Activated T-helper 1 cell treated with anti-CD3 and anti-CD28 coated beads, Interleukin-12 subunit alpha, Interleukin-12 subunit beta, Interleukin-2, Interleukin-4 antibody, amounts not matched to agents 30 ng/mL and 10 ng/mL and 1 ng/mL, durations not matched to agents 14 hours and 24 hours and 36 hours (primary cell): ENCODE measurements at regions of chr14 and their contacts with region 1.

Region 1: GRCh38 chr14:34875031-34875922 is at the start of gene BAZ1A:
- DNase-seq: peak; percentile 41
- H3K4me3 Mint-ChIP-seq: peak within 1 kb of the TSS; percentile 100
- H3K27ac Mint-ChIP-seq: peak within 1 kb of the TSS; percentile 100
- H3K4me1 Mint-ChIP-seq: peaks cover 34% of the 10 kb centered on the region
- H3K27me3 Mint-ChIP-seq: peaks cover 2% of the 10 kb centered on the region
- total RNA-seq, gene BAZ1A: 75.0 and 83.7 TPM in 2 replicates

Region 2: DNA sequence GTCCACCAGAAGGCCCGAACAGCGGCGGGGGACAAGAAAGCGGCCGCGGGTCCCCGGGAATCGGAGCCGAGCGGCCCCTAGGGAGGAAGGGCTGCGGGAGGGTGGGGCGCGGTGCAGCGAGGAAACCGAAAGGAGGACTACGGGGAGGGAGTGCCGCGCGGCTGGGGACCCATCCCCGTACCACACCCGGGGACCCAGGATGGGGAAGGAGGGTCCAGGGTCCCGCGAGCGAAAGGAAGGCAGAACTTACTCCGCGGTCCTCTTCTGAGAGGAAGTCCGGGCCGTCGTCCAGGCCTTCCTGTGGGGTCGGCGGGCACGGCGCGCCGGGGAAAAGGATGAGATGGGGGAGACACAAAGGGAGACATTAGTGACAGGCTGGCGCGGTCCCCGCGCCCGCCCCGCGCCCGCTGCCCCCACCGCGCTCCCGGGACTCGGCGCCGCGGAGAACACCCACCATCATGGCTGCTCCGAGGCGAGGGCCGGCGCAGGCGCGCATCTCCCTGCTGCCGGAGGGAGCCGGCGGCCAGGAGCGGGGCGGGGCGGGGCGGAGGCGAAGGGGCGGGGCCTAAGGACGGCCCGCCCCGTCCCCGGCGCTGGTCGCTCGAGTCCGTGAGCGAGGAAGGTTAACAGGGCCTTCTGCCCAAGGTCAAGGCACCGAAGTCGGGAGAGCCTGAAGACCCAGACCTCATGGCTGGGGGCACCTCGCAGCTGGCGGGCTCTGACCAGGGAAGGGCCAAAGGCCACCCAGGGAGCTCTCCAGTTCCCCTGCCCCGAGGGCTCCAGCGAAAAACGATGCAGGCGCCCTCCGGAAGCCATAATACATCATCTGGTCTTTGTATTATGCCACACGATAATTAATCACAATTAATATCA is 245.4 kb before region 1 on chr14 and contains the start of gene SNX6:
- intact Hi-C with region 1: loop called (anchors 1 kb)
- DNase-seq: peak; percentile 76
- H3K4me3 Mint-ChIP-seq: peak within 1 kb of the TSS; percentile 95
- H3K27ac Mint-ChIP-seq: peak within 1 kb of the TSS; percentile 99
- H3K4me1 Mint-ChIP-seq: peaks cover 8% of the 10 kb centered on the region
- H3K27me3 Mint-ChIP-seq: peaks cover 11% of the 10 kb centered on the region
- total RNA-seq, gene SNX6: 70.3 and 75.6 TPM in 2 replicates

Region 3: GRCh38 chr14:34714320-34715126 is 160.8 kb before region 1 on chr14 and contains the start of gene CFL2:
- intact Hi-C with region 1: loop called (anchors 1 kb)
- DNase-seq: peak; percentile 51
- H3K4me3 Mint-ChIP-seq: peak within 1 kb of the TSS; percentile 95
- H3K27ac Mint-ChIP-seq: peak within 1 kb of the TSS; percentile 95
- H3K4me1 Mint-ChIP-seq: peaks cover 33% of the 10 kb centered on the region
- H3K27me3 Mint-ChIP-seq: peaks cover 9% of the 10 kb centered on the region
- total RNA-seq, gene CFL2: 8.3 and 9.2 TPM in 2 replicates

Region 4: DNA sequence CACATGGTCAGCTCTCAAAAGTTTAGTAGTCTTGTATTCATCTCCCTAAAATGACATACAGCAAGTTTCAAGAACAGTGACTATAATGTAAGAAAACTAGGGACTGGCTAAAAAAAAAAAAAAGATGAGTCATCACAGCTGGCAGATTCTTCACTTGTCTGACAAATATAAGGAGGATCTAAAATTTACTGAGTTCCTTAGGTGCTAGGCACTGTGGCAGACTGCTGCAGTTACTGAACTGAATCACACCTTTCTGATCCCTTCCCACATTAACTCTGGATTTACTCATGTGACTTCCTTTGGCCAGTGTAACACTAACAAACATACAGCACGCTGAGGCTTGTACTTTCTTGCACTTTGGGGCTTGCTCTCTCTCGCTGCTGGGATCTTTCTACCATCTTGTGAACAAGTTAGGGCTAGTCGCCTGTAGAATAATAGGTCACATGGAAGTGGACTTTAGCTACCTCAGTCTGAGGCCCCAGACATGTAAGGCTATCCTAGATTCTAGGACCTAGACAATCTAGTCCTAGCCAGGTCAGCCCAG is 32.2 kb before region 1 on chr14:
- intact Hi-C with region 1: loop called (anchors 1 kb)
- DNase-seq: peak; percentile 3
- H3K4me3 Mint-ChIP-seq: no peak overlapping the region
- H3K27ac Mint-ChIP-seq: peak overlapping the region; percentile 9
- H3K4me1 Mint-ChIP-seq: peaks cover 12% of the 10 kb centered on the region
- H3K27me3 Mint-ChIP-seq: no peaks in the 10 kb centered on the region

Region 5: DNA sequence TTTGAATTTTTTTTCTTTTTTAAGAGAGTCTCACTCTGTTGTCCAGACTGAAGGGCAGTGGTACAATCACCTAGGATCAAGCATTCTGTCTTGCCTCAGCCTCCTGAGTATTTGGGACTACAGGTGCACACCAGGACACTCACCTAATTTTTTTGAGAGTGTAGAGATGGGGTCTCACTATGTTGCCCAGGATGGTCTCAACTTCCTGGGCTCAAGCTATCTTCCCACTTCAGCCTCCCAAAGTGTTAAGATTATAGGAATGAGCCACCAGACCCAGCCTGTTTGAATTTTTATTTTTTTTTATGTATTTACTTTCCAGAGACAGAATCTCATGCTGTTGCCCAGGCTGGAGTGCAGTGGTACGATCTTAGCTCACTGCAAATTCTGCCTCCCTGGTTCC is 11.4 kb before region 1 on chr14:
- intact Hi-C with region 1: no loop called
- DNase-seq: no peak
- H3K4me3 Mint-ChIP-seq: no peak overlapping the region
- H3K27ac Mint-ChIP-seq: no peak overlapping the region
- H3K4me1 Mint-ChIP-seq: peaks cover 8% of the 10 kb centered on the region
- H3K27me3 Mint-ChIP-seq: no peaks in the 10 kb centered on the region

Region 6: DNA sequence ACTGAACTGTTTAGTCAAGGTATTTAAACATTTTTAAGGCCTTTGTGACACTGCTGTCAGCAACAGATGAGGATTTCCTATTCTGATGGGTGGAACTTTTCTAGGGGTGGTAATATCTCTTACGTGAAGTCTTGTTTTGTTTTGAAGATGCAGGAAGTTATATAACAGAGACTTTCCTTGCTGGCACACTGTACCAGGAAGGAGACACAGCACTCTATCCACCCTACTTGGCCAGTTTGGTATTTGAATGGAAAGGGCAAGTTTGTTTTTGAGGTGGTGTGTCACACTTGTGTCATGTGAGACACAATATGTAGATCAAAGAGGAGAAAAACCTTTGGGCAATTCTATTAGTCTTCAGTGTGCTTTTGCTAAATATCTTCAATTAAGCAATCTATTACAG is 55.9 kb after region 1 on chr14:
- intact Hi-C with region 1: loop called (anchors 1 kb)
- DNase-seq: peak; percentile 10
- H3K4me3 Mint-ChIP-seq: peak overlapping the region; percentile 59
- H3K27ac Mint-ChIP-seq: peak overlapping the region; percentile 81
- H3K4me1 Mint-ChIP-seq: peaks cover 35% of the 10 kb centered on the region
- H3K27me3 Mint-ChIP-seq: no peaks in the 10 kb centered on the region

Region 7: DNA sequence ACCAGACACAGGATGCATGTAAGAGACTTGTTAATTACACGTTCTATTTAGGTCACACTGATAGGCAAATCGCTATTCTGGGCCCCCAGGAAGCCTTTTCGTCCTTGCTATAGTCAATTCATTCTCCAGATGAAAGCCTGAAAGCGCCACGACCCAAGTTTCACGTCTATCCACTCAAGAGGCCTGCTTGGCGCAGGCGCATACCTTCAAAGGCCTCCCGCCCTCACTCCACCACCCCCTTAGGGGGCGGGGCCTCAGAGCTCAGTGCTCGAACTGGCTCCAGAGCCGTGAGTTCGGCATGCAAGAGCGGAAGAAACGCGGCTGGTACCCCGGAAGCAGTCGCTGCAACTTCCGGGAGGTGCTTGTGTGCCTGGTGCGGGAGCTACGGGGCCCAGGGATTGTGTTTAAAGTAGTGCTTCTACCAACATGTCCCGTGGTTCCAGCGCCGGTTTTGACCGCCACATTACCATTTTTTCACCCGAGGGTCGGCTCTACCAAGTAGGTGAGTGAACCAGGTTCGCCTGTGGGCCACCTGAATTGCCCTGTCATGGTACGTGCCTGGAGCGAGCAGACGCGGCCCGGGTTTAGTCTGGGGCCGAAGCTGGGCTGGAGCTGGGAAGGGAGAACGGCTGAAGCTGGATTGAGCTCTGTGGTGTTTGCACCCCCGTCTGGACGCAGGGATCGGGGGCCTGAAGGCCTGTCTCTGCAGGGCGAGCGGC is 416.9 kb after region 1 on chr14 and contains the start of gene PSMA6:
- intact Hi-C with region 1: loop called (anchors 2 kb)
- DNase-seq: peak; percentile 99
- H3K4me3 Mint-ChIP-seq: peak within 1 kb of the TSS; percentile 99
- H3K27ac Mint-ChIP-seq: peak within 1 kb of the TSS; percentile 94
- H3K4me1 Mint-ChIP-seq: peaks cover 56% of the 10 kb centered on the region
- H3K27me3 Mint-ChIP-seq: no peaks in the 10 kb centered on the region
- total RNA-seq, gene PSMA6: 475 and 479 TPM in 2 replicates

Region 8: DNA sequence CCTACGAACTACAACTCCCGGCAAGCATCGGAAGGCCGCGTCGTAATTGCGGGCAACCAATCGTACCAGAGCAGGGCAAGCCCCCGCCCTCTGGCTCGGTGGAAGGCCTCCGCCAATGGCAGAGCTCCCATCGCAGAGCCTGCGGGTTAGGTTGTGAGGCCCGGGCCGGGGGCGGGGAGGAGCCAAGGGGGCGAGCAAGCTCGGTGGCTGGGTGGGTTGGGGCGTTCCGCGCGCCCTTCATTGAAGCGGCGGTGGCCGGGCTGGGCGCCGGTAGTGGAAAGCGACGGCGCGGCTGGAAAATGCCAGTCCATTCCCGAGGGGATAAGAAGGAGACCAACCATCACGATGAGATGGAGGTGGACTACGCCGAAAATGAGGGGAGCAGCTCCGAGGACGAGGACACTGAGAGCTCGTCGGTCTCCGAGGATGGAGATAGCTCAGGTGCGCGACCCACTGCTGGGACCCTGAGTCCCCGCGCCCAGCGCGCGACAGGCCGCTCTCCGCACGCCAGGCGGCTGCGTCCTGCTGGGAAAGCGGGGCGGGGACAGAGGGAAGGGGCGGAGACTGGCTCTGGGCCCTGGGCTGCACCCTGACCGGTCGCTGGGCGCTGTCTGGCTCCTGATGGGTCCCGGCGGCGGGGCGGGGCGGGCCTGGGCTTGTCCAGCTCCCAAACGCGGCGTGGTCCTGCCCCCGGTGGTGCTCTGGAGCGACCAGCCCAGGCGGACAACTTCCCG is 951.1 kb after region 1 on chr14 and contains the start of gene BRMS1L:
- intact Hi-C with region 1: loop called (anchors 10 kb)
- DNase-seq: peak; percentile 96
- H3K4me3 Mint-ChIP-seq: peak within 1 kb of the TSS; percentile 88
- H3K27ac Mint-ChIP-seq: peak within 1 kb of the TSS; percentile 90
- H3K4me1 Mint-ChIP-seq: peaks cover 16% of the 10 kb centered on the region
- H3K27me3 Mint-ChIP-seq: peaks cover 4% of the 10 kb centered on the region
- total RNA-seq, gene BRMS1L: 6.3 and 9.1 TPM in 2 replicates